Calu3 (cell line): ENCODE measurements at regions of chr7 and their contacts with region 1.

Region 1: DNA sequence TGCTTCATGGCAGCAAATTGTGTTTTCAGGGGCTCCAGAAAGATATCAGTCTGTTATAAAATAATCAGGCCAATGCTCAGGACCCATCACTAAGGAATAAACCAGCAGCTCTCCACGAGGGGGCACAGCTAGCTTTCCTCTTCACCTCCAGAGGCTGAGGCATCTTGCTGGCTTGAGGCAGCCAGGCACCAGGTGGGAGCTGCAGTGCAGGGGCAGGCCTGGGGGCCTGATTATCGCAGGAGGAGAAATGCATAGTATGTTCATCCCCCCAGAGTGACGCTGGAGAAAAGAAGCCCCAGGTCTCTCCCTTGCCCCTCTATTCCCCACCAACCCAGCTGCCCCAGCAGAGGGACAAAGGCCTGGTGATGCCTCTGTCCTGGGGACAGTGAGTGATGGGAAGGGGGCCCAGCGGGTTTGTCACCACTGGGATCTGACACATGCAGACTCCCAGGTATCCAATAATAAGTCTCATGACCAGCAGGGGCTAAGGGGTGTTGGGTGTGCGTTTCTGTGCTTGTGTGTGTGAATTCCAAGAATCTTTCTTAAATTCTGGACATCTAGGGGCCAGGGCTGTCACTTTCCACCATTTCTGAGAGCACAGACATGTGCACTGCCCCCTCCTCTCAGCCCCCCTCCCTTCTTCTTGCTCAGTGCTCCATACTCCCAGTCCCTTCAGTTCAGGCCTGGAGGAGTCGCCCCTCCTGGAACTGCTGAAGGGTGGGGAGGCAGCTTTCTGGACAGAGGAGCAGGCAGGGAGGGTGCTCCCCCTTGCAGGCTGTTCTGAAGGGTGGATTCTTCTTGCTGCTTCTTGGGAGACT is 128.1 kb upstream of the FAM20C start:
- DNase-seq: peak; percentile 84
- H3K4me3 Mint-ChIP-seq: no peak overlapping the region
- H3K27ac Mint-ChIP-seq: no peak overlapping the region
- H3K4me1 Mint-ChIP-seq: no peaks in the 10 kb centered on the region
- H3K27me3 Mint-ChIP-seq: peaks cover 65% of the 10 kb centered on the region
- CTCF ChIP-seq: peak; percentile 77

Region 2: GRCh38 chr7:119392-120163 is 55.3 kb after region 1 on chr7:
- CTCF ChIA-PET with region 1: interaction called, 4 read pairs
- intact Hi-C with region 1: loop called (anchors 2 kb)
- DNase-seq: no peak
- H3K4me3 Mint-ChIP-seq: no peak overlapping the region
- H3K27ac Mint-ChIP-seq: no peak overlapping the region
- H3K4me1 Mint-ChIP-seq: no peaks in the 10 kb centered on the region
- H3K27me3 Mint-ChIP-seq: peaks cover 84% of the 10 kb centered on the region
- CTCF ChIP-seq: no peak

Region 3: GRCh38 chr7:266851-267840 is 202.8 kb after region 1 on chr7:
- CTCF ChIA-PET with region 1: interaction called, 14 read pairs
- intact Hi-C with region 1: no loop called
- DNase-seq: peak; percentile 77
- H3K4me3 Mint-ChIP-seq: no peak overlapping the region
- H3K27ac Mint-ChIP-seq: no peak overlapping the region
- H3K4me1 Mint-ChIP-seq: peaks cover 22% of the 10 kb centered on the region
- H3K27me3 Mint-ChIP-seq: peaks cover 74% of the 10 kb centered on the region
- CTCF ChIP-seq: peak; percentile 81